Right ventricle myocardium inferior (tissue), 1 donor: ENCODE measurements at regions of chr7 and their contacts with region 1.

Region 1: GRCh38 chr7:35465791-35466336 is 212.0 kb upstream of the TBX20 start:
- DNase-seq: peak; percentile 88
- ATAC-seq: peak; percentile 93

Region 2: GRCh38 chr7:35379481-35379880 is 86.4 kb before region 1 on chr7:
- intact Hi-C with region 1: loop called (anchors 5 kb)
- DNase-seq: no peak
- ATAC-seq: no peak